GM12878 (cell line): ENCODE measurements at regions of chr20 and their contacts with region 1.

Region 1: GRCh38 chr20:44960103-44960852 is at the start of gene TOMM34:
- DNase-seq: no peak
- ATAC-seq: peak; percentile 94
- H3K4me3 ChIP-seq: peak within 1 kb of the TSS; percentile 85
- H3K27ac ChIP-seq: peak within 1 kb of the TSS; percentile 81
- H3K4me1 ChIP-seq: peaks cover 34% of the 10 kb centered on the region
- H3K27me3 ChIP-seq: no peaks in the 10 kb centered on the region
- CTCF ChIP-seq: 0 out of 6 replicates have a peak, but pooled peaks of 2 of the 3 experiments have one; percentile 0 to 2
- EP300 ChIP-seq: no peak
- POLR2A ChIP-seq: peak; percentile 89
- RAD21 ChIP-seq: no peak
- polyA plus RNA-seq, gene TOMM34: 14.0 to 24.5 TPM

Region 2: DNA sequence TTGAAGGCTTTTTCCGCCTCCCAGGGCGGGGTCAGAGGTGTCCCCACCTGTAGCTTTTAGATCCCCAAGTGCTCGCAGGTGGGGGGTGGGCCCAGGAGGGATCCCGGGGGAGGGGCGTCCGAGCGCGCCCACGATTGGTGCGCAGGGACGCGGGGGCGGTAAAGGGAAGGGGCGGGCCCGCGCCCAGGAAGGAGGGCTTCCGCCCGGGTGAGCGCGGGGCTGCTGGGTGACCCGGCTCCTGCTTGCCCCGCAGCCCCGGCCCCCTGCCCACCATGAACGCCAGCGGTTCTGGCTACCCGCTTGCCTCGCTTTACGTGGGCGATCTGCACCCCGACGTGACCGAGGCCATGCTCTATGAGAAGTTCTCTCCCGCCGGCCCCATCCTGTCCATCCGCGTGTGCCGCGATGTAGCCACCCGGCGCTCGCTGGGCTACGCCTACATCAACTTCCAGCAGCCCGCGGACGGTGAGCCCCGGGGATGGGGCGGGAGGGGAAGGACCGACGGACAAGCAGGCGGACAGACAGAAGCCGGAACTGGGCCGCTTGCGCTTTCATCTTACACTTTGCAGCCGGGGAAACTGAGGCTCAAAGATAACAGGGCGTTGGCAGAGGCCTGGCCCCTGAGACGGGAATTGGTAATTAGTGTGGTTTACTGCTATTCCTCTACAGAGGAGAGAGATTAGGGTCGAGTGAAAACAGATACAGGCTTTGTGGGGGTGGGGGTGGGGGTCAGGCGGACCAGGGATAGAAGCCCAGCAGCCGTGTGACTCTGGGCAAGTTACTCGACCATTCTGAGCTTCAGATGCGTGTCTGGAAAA is 50.2 kb before region 1 on chr20 and contains the start of gene PABPC1L:
- CTCF ChIA-PET with region 1: interaction called, 5 read pairs
- POLR2A ChIA-PET with region 1: interaction called, 5 read pairs
- RAD21 ChIA-PET with region 1: interaction called, 7 read pairs
- SMC1A ChIA-PET with region 1: interaction called, 15 read pairs
- in situ Hi-C with region 1: no loop called
- intact Hi-C with region 1: no loop called
- DNase-seq: peak; percentile 13
- ATAC-seq: peak; percentile 98
- H3K4me3 ChIP-seq: peak within 1 kb of the TSS; percentile 91
- H3K27ac ChIP-seq: no peak within 1 kb of the TSS; the same call in 1 of the 2 replicates
- H3K4me1 ChIP-seq: peaks cover 3% of the 10 kb centered on the region
- H3K27me3 ChIP-seq: no peaks in the 10 kb centered on the region
- CTCF ChIP-seq: no peak
- EP300 ChIP-seq: no peak
- POLR2A ChIP-seq: peak; percentile 85
- RAD21 ChIP-seq: no peak
- polyA plus RNA-seq, gene PABPC1L: 6.1 to 7.1 TPM

Region 3: GRCh38 chr20:44930516-44931168 is 29.6 kb before region 1 on chr20:
- CTCF ChIA-PET with region 1: no interaction called
- POLR2A ChIA-PET with region 1: no interaction called
- RAD21 ChIA-PET with region 1: no interaction called
- SMC1A ChIA-PET with region 1: no interaction called
- in situ Hi-C with region 1: no loop called
- intact Hi-C with region 1: no loop called
- DNase-seq: no peak
- ATAC-seq: no peak
- H3K4me3 ChIP-seq: no peak overlapping the region
- H3K27ac ChIP-seq: no peak overlapping the region
- H3K4me1 ChIP-seq: no peaks in the 10 kb centered on the region
- H3K27me3 ChIP-seq: no peaks in the 10 kb centered on the region
- CTCF ChIP-seq: no peak
- EP300 ChIP-seq: no peak
- POLR2A ChIP-seq: no peak
- RAD21 ChIP-seq: no peak

Region 4: DNA sequence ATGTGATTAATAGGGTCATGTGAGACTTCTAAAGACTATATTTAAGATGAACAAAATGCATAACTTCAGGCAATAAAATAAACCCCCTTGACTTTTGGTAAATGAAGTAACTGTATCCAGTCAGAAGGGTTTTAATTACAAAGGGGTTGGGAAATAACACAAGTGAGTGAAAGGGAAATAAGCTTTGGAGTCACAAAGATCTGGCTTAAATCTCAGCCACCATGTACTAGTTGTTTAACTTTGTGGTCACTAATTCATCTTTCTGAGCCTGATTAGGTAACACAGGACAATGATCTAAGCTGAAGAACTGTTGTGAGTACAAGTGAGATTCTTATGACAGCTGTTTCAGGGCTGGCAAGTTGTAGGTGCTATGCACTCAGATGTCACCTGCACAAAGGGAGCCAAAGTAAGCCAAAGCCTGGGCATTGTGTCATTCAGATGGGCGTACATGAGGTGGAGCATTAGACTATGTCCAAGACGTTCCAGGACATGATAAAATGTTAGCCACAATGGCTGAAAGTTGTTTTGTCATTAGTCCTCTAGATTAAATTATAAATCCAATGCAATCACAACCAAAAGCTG is 13.9 kb before region 1 on chr20:
- CTCF ChIA-PET with region 1: interaction called, 5 read pairs
- POLR2A ChIA-PET with region 1: interaction called, 4 read pairs
- RAD21 ChIA-PET with region 1: interaction called, 4 read pairs
- SMC1A ChIA-PET with region 1: interaction called, 12 read pairs
- in situ Hi-C with region 1: no loop called
- intact Hi-C with region 1: no loop called
- DNase-seq: no peak
- ATAC-seq: no peak
- H3K4me3 ChIP-seq: no peak overlapping the region
- H3K27ac ChIP-seq: no peak overlapping the region
- H3K4me1 ChIP-seq: no peaks in the 10 kb centered on the region
- H3K27me3 ChIP-seq: no peaks in the 10 kb centered on the region
- CTCF ChIP-seq: no peak
- EP300 ChIP-seq: no peak
- POLR2A ChIP-seq: no peak
- RAD21 ChIP-seq: no peak

Region 5: DNA sequence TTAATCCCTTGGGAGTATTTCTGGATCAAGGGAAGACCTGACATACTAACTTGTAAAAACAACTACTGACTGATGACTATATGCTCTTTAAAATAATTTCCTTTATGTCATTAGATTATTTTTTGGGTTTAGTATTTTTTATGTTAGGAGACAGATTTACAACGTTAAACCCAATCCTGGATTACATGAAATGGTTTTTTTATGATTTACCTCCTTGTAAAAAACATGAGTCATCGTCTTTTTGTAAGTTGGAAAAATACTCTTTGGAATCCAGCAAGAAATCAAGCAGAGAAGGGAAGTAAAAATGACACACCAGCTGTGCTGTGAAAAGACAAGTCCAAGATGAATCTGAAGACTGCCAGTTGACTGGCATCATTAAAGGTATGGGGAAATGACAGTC is 12.8 kb after region 1 on chr20:
- CTCF ChIA-PET with region 1: interaction called, 21 read pairs
- POLR2A ChIA-PET with region 1: interaction called, 48 read pairs
- RAD21 ChIA-PET with region 1: interaction called, 8 read pairs
- SMC1A ChIA-PET with region 1: interaction called, 66 read pairs
- in situ Hi-C with region 1: no loop called
- intact Hi-C with region 1: no loop called
- DNase-seq: no peak
- ATAC-seq: no peak
- H3K4me3 ChIP-seq: no peak overlapping the region
- H3K27ac ChIP-seq: peak overlapping the region; percentile 23; the same call in 1 of the 2 replicates
- H3K4me1 ChIP-seq: peaks cover 3% of the 10 kb centered on the region
- H3K27me3 ChIP-seq: no peaks in the 10 kb centered on the region
- CTCF ChIP-seq: no peak
- EP300 ChIP-seq: no peak
- POLR2A ChIP-seq: no peak
- RAD21 ChIP-seq: no peak

Region 6: DNA sequence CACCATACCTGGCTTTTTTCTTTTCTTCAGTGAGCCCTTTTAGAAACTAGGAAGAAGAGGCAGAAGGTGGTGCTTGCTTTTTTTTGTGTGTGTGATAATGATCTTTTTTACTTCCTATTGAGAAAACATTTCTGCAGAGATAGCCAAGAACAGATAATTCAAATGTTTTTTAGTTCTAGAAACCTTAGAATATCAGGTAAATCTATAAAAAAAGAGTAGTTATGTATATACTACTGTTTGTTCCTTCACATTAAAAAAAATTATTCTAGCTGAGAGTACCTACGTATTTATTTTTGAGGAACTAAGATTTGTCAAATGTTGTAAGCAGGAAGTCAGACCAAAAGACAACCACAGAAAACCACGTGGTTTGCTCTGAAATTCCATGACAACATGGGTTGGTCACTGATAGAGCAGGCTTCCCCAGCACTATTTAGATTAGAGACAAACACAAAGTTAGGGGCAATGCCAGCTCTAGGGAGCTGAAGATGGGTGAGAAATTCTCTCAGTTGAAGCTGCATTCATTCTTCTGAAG is 18.9 kb after region 1 on chr20:
- CTCF ChIA-PET with region 1: interaction called, 21 read pairs
- POLR2A ChIA-PET with region 1: interaction called, 48 read pairs
- RAD21 ChIA-PET with region 1: interaction called, 8 read pairs
- SMC1A ChIA-PET with region 1: interaction called, 66 read pairs
- in situ Hi-C with region 1: no loop called
- intact Hi-C with region 1: no loop called
- DNase-seq: peak; percentile 82
- ATAC-seq: peak; percentile 95
- H3K4me3 ChIP-seq: 0 out of 2 replicates have a peak overlapping the region, but pooled peaks have one; percentile 27
- H3K27ac ChIP-seq: peak overlapping the region; percentile 89
- H3K4me1 ChIP-seq: peaks cover 17% of the 10 kb centered on the region
- H3K27me3 ChIP-seq: no peaks in the 10 kb centered on the region
- CTCF ChIP-seq: no peak
- EP300 ChIP-seq: peak; percentile 65 to 66; a peak in 3 of 4 replicates
- POLR2A ChIP-seq: no peak
- RAD21 ChIP-seq: no peak